IMR-90 (cell line): ENCODE measurements at regions of chr5 and their contacts with region 1.

Region 1: DNA sequence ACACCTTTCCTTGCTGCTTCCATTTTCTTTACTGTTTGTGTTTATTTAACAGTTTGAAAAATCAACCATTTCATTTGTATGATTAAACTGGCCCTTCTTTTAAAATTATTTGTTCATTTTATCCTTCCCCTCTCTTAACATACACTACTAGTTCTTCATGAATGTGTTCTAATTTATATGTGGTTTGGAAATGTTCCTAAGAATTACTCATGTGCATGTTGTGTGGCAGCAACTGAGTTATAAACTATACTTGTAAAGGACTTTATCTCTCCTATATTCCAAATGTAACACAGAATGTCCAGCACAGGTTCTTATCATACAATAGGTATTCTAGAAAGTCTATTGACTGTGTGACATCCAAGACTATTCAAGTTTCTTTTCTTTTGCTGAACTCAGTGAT is 358.2 kb upstream of the MEF2C start:
- DNase-seq: peak; percentile 66
- ATAC-seq: peak; percentile 48
- H3K4me3 ChIP-seq: no peak overlapping the region
- H3K27ac ChIP-seq: no peak overlapping the region
- H3K4me1 ChIP-seq: no peaks in the 10 kb centered on the region
- H3K27me3 ChIP-seq: no peaks in the 10 kb centered on the region; the same call in 1 of the 2 replicates
- CTCF ChIP-seq: no peak
- POLR2A ChIP-seq: no peak
- RAD21 ChIP-seq: no peak

Region 2: DNA sequence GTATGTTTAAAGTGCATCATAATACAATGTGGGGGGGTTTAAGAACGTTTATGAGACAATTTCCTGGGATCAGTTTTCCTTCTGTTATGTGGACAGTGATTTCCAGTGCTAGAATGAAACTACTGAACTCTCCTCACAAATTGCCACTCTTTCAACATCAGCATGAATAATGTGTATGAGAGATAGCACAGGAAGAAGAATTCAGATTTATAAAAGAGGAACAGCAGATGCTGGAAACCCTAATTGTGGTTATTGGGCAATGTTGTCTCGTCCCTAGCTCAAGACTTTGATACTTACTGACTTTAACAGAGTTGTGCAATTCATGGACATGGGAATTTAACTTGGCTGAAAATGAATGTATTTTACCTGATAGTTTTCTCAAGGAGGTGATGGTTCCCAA is 52.6 kb after region 1 on chr5:
- CTCF ChIA-PET with region 1: no interaction called
- POLR2A ChIA-PET with region 1: no interaction called
- dilution Hi-C with region 1: no loop called
- in situ Hi-C with region 1: no loop called
- intact Hi-C with region 1: loop called (anchors 5 kb)
- DNase-seq: peak; percentile 49
- ATAC-seq: no peak
- H3K4me3 ChIP-seq: no peak overlapping the region
- H3K27ac ChIP-seq: no peak overlapping the region
- H3K4me1 ChIP-seq: no peaks in the 10 kb centered on the region
- H3K27me3 ChIP-seq: no peaks in the 10 kb centered on the region
- CTCF ChIP-seq: no peak
- POLR2A ChIP-seq: no peak
- RAD21 ChIP-seq: no peak